ENCODE measurements at regions of chr6 and their contacts with region 1.

Region 1: DNA sequence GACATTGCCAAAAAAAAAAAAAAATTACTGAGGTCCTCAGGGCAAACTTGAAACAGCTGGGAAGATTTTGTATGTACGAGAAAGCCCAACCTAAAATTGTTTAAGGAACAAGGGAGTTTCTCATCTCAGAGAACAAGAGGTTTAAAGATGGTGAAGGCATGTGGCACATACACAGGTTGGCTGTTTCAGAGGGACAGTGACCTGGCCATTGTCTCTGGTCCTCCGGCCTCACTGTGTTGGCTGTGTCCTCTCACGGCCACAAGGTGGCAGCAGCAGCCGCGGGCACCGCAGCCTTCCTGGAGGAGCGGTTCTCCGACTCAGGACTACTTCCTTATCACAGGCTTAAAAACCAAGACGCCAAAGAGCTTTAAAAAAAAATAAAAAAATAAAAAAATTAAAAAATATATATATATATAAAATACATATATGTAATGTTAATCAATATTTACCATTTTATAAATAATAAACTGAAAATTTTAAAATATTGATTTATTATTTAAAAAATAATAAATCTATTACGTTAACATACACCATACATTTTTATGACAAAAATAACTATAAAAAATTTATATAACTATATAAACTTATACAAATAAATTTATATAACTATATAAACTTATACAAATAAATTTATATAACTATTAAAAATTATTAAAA is 52.8 kb downstream of the GTF2H5 start:
- DNase-seq: peak; percentile 94
- ATAC-seq: peak; percentile 91

Region 2: GRCh38 chr6:158518191-158519127 is 297.5 kb after region 1 on chr6:
- intact Hi-C with region 1: loop called (anchors 5 kb)
- DNase-seq: no peak
- ATAC-seq: peak; percentile 65

Region 3: DNA sequence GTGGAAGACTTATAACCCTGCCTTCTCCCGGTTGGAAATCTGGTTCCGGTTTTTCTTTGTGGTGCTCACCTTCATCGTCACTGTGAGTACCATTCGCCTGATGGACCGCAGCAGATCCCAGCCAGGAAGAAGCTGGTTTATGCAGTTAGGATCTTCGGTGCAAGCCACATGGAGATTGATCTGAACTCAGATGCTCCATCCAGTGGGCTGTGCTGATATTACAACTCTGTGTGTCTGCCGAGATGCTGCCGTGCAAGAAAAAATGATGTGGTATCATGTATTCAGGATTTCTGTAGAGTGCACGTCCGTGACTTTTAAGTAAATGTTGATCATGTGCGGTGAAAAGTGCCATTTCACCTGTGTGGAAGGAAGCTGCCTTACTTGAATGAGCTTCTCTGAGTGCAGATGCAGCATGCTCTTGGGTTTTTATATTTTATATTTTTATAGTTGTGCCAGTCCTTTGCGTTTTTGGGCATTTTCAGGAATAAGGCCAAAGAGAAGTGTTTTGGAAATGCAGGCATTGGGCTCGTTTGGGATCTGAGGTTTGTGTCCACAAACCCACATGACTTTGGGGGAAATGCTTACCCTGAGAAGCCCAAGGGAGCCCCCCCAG is 384.5 kb after region 1 on chr6:
- intact Hi-C with region 1: loop called (anchors 1 kb)
- DNase-seq: no peak
- ATAC-seq: peak; percentile 49

Region 4: GRCh38 chr6:158694913-158695312 is 474.0 kb after region 1 on chr6:
- intact Hi-C with region 1: loop called (anchors 5 kb)
- DNase-seq: no peak
- ATAC-seq: no peak